ENCODE measurements at regions of chr10 and their contacts with region 1.

Region 1: DNA sequence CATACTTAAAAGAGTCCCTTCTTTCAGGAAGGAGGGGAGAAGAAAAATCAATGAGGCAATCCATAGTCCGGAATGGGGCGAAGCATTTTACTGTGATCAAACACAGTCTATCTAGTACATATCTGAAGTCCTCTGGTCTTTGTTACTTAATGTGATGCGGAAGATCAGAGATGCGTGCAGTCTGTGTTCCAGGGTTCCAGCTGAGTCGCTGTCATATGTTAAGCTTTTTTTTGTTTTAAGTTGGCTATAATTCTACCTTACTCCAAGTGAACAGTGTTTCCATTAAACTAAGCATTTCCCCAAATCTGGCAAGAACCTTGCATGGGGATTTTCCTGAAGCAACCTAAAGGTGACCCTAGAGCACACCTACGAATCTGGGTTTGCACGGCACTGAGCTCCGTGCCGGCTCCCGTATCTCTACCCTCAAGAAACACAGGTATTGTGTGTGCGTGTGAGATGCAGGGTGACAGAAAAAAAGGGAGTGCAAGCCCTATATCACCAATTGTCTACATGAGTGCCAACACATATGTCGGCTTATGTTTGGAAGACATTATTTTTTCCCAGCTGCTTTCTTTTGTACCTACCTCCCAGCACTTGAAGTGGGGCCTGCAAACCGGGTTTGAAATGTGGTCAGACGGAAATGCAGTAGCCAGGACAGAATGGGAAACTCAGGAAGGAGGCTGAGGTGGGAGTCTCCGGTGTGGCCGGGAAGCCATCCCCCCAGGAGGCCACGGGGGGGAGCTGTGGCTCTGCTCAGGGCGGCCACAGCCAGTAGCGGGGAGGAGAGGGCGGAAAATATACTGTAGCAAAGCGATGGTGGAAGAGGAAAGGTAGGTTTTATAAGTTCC is 435.8 kb upstream of the MGMT start:
- DNase-seq: peak in 1 of 2 donors; percentile 28
- ATAC-seq: peak; percentile 41 to 72
- H3K4me3 ChIP-seq: peak overlapping the region in 2 of 4 donors; percentile 11 to 27
- H3K27ac ChIP-seq: no peak overlapping the region
- H3K4me1 ChIP-seq: peaks cover 0 to 4% of the 10 kb centered on the region in 2 donors
- H3K27me3 ChIP-seq: peaks cover 17 to 52% (median 34%) of the 10 kb centered on the region in 3 donors
- CTCF ChIP-seq: peak; percentile 48 to 87 (median 71)
- POLR2A ChIP-seq: no peak

Region 2: DNA sequence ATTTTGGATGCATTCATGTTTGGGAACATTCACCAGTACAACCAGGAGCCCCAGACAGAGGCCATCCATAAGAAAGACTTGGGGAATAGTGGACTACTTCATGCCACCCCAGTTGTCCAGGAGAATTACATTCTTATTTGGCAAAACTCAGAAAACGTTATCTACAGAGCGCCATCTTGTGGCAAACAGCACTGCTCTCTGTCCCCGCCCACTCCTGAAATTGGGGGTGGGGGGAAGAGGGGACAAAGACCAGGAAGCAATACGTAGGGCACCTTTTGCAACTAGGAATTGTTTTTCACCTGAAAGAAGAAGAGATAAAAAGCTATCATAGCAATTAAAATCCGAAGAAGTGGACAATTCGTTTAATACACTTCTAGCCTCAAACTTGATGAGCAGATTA is 301.3 kb after region 1 on chr10:
- in situ Hi-C with region 1: loop called in 2 of 4 experiments (anchors 10 kb)
- intact Hi-C with region 1: loop called (anchors 10 kb)
- DNase-seq: no peak
- ATAC-seq: no peak
- H3K4me3 ChIP-seq: no peak overlapping the region
- H3K27ac ChIP-seq: no peak overlapping the region
- H3K4me1 ChIP-seq: no peaks in the 10 kb centered on the region
- H3K27me3 ChIP-seq: no peaks in the 10 kb centered on the region
- CTCF ChIP-seq: peak in 4 of 5 experiments; percentile 12 to 42 (median 26)
- POLR2A ChIP-seq: no peak

Region 3: GRCh38 chr10:129888784-129889616 is 857.8 kb after region 1 on chr10:
- in situ Hi-C with region 1: no loop called
- intact Hi-C with region 1: loop called (anchors 10 kb)
- DNase-seq: peak in 1 of 2 donors; percentile 25
- ATAC-seq: peak; percentile 30 to 34
- H3K4me3 ChIP-seq: no peak overlapping the region
- H3K27ac ChIP-seq: peak overlapping the region in 3 of 4 donors; percentile 5 to 12 (median 8)
- H3K4me1 ChIP-seq: peaks cover 17 to 21% of the 10 kb centered on the region in 2 donors
- H3K27me3 ChIP-seq: no peaks in the 10 kb centered on the region
- CTCF ChIP-seq: peak; percentile 33 to 65 (median 56)
- POLR2A ChIP-seq: no peak

Region 4: DNA sequence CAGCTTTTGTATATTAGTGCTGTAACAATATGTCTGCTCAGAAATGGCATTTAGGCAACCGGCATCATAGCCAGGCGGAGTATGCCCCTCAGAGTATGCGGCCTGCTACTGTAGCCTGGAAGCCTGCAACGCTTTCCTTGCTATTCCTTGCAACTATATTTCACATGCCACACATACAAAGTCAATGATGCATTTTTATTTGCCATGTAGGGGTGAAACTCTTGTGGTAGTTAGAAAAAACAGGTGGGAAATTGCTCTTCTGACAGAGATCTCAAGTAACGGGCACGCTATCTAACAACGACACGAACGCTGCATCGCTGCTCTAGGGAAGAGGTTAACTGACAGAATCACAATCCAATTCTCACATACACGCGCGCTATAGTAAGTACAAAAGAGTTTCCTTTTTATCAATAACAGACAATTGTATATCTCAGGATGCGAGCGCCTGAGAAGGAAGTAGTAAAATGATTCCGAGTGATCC is 927.0 kb after region 1 on chr10:
- in situ Hi-C with region 1: loop called in 1 of 4 experiments (anchors 25 kb)
- intact Hi-C with region 1: loop called (anchors 5 kb)
- DNase-seq: no peak
- ATAC-seq: no peak
- H3K4me3 ChIP-seq: peak overlapping the region; percentile 53 to 79 (median 60)
- H3K27ac ChIP-seq: peak overlapping the region; percentile 76 to 84 (median 80)
- H3K4me1 ChIP-seq: peaks cover 8 to 20% of the 10 kb centered on the region in 2 donors
- H3K27me3 ChIP-seq: peaks cover 49 to 63% (median 57%) of the 10 kb centered on the region in 3 donors
- CTCF ChIP-seq: peak in 3 of 5 experiments; percentile 26 to 40 (median 28)
- POLR2A ChIP-seq: no peak

Region 5: DNA sequence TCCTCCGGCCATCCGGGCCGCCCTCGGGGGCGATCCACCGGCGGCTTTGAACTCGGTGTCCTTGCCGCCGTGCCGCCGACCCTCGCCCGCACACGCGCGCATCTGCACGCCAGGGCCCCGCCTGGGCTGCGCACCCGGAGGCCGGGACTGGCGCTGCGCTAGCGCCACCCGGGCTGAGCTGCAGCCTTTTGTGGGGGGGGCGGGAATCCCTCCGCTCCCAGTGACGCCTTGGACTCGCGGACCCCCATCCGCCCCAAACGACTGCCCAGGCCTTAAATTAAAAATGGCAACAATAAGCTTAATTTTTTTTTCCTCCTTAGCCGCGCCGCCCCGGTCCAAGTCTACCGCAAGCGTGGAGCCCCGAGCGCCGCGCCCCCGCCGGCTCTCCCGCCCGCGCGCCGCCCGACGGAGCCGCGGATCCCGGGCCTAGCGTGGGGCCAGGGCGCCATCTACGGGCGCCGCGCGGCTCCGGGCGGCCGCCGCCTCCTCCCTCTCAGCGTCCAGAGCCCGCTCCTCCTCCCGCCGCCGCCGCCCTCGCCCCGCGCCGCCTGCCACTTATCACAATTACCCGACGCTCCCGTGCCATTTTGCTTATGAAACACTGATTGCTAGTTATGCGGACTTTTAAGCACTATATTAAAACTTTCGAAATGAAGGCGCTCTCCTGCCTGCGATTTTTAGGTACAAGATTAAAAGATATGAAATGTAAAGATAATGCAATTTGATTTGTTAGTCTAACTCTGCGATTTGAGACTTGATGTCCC is 940.3 kb after region 1 on chr10:
- in situ Hi-C with region 1: loop called (anchors 10 to 25 kb)
- intact Hi-C with region 1: loop called (anchors 2 kb)
- DNase-seq: no peak
- ATAC-seq: peak; percentile 60 to 71
- H3K4me3 ChIP-seq: peak overlapping the region; percentile 40 to 60 (median 48)
- H3K27ac ChIP-seq: no peak overlapping the region
- H3K4me1 ChIP-seq: peaks cover 9 to 20% of the 10 kb centered on the region in 2 donors
- H3K27me3 ChIP-seq: peaks cover 59 to 64% (median 62%) of the 10 kb centered on the region in 3 donors
- CTCF ChIP-seq: peak in 4 of 5 experiments; percentile 51 to 84 (median 56)
- POLR2A ChIP-seq: no peak

Region 6: GRCh38 chr10:129993621-129994020 is 962.4 kb after region 1 on chr10:
- in situ Hi-C with region 1: loop called in 1 of 4 experiments (anchors 25 kb)
- intact Hi-C with region 1: no loop called
- DNase-seq: no peak
- ATAC-seq: peak; percentile 33 to 65
- H3K4me3 ChIP-seq: no peak overlapping the region
- H3K27ac ChIP-seq: no peak overlapping the region
- H3K4me1 ChIP-seq: no peaks in the 10 kb centered on the region
- H3K27me3 ChIP-seq: no peaks in the 10 kb centered on the region
- CTCF ChIP-seq: no peak
- POLR2A ChIP-seq: no peak

Region 7: DNA sequence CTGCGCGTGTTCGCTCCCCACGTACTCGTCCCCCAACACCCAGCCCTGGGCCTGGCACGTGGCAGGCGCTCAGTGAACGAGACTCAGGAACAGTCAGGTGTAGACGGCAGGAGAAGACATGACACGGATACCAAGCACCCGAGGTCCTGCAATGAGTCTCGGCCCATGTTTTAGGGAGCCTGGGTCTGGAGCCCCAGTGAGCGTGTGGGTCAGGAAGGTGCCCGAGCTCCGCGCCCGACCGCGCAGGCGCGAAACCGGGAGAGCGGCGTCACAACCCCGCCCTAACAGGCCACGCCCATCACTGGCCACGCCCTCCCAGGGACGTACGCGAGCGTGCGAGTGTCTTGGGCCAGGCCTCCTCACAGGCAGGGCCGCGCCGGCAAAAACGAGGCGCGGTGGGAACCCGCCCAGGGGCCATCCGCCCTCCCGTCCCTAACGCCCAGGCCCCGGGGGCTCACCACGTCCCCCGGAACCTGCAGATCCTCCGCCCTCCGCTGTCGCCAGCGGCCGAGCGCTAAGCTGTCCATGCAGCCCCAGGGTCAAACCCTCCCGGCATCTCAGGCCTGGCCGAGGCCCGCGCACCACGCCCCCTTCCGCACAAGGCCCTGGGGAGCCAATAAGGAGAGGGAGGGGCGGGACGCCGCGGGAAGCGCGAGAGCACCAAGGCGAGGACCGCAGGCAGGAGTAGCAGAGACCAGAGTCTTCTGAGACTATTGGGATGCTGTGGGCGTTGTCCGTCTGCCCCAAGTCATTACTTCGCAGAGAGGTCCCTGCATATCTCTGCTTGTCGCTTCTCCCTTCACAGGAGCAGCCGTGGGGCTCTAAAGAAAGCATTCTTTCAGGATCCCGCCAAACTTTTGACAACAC is 1079.3 kb after region 1 on chr10 and contains the start of gene C10orf143:
- in situ Hi-C with region 1: loop called in 1 of 4 experiments (anchors 25 kb)
- intact Hi-C with region 1: no loop called
- DNase-seq: peak; percentile 96 to 97
- ATAC-seq: peak; percentile 89 to 90
- H3K4me3 ChIP-seq: peak within 1 kb of the TSS; percentile 80 to 96 (median 90)
- H3K27ac ChIP-seq: peak within 1 kb of the TSS; percentile 92 to 99 (median 96)
- H3K4me1 ChIP-seq: peaks cover 16 to 26% of the 10 kb centered on the region in 2 donors
- H3K27me3 ChIP-seq: no peaks in the 10 kb centered on the region
- CTCF ChIP-seq: no peak
- POLR2A ChIP-seq: peak; percentile 80 to 81
- total RNA-seq, gene C10orf143: 0.55 to 2.5 (median 1.3) TPM